T-cell (primary cell): ENCODE measurements at regions of chr21 and their contacts with region 1.

Region 1: GRCh38 chr21:34888569-34889319 is 160.4 kb downstream of the RUNX1 start:
- DNase-seq: peak; percentile 29 to 83 (median 54)
- ATAC-seq: peak; percentile 44 to 55 (median 50)
- H3K4me3 ChIP-seq: peak overlapping the region; percentile 48 to 73
- H3K4me3 Mint-ChIP-seq: peak overlapping the region; percentile 89 to 98 (median 96)
- H3K27ac ChIP-seq: peak overlapping the region; percentile 72
- H3K27ac Mint-ChIP-seq: peak overlapping the region; percentile 96 to 98
- H3K4me1 ChIP-seq: peaks cover 47 to 52% of the 10 kb centered on the region in 2 experiments
- H3K4me1 Mint-ChIP-seq: peaks cover 54 to 66% (median 59%) of the 10 kb centered on the region in 3 donors
- H3K27me3 ChIP-seq: no peaks in the 10 kb centered on the region
- H3K27me3 Mint-ChIP-seq: no peaks in the 10 kb centered on the region

Region 2: DNA sequence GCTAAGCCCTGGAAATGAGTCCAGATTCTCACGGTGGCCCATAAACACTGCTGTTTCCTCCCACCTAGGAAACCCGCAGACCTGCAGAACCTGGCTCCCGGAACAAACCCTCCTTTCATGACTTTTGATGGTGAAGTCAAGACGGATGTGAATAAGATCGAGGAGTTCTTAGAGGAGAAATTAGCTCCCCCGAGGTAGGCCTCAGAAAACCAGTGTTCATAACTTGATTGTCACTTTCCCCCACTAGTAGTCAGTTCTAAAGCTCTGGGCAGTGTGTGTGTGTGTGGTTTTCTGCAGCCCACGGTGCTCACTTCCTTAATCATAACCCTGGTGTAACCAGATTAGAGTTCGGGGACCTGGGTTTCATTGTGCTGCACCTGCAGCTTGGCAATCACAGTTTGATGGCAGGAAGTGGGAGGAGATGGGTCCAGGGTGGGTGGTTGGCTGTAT is 180.8 kb before region 1 on chr21:
- CTCF ChIA-PET with region 1: no interaction called
- POLR2A ChIA-PET with region 1: no interaction called
- DNase-seq: peak in 29 of 35 experiments; percentile 3 to 51 (median 23)
- ATAC-seq: peak; percentile 82 to 92 (median 87)
- H3K4me3 ChIP-seq: no peak overlapping the region
- H3K4me3 Mint-ChIP-seq: peak overlapping the region; percentile 13 to 68 (median 42)
- H3K27ac ChIP-seq: no peak overlapping the region
- H3K27ac Mint-ChIP-seq: peak overlapping the region; percentile 46 to 78
- H3K4me1 ChIP-seq: peaks cover 5 to 20% of the 10 kb centered on the region in 2 experiments
- H3K4me1 Mint-ChIP-seq: peaks cover 22 to 29% (median 27%) of the 10 kb centered on the region in 3 donors
- H3K27me3 ChIP-seq: peaks cover 0 to 5% of the 10 kb centered on the region in 2 experiments
- H3K27me3 Mint-ChIP-seq: peaks cover 3 to 5% of the 10 kb centered on the region in 2 donors

Region 3: GRCh38 chr21:34838956-34839820 is 49.6 kb before region 1 on chr21:
- CTCF ChIA-PET with region 1: no interaction called
- POLR2A ChIA-PET with region 1: no interaction called
- DNase-seq: no peak
- ATAC-seq: no peak
- H3K4me3 ChIP-seq: no peak overlapping the region
- H3K4me3 Mint-ChIP-seq: no peak overlapping the region
- H3K27ac ChIP-seq: no peak overlapping the region
- H3K27ac Mint-ChIP-seq: peak overlapping the region in 1 of 2 donors; percentile 29
- H3K4me1 ChIP-seq: peaks cover 6 to 29% of the 10 kb centered on the region in 2 experiments
- H3K4me1 Mint-ChIP-seq: peaks cover 51 to 66% (median 66%) of the 10 kb centered on the region in 3 donors
- H3K27me3 ChIP-seq: no peaks in the 10 kb centered on the region
- H3K27me3 Mint-ChIP-seq: no peaks in the 10 kb centered on the region

Region 4: GRCh38 chr21:35400233-35400957 is 511.7 kb after region 1 on chr21:
- CTCF ChIA-PET with region 1: interaction called, 4 to 12 read pairs
- POLR2A ChIA-PET with region 1: no interaction called
- DNase-seq: peak in 29 of 35 experiments; percentile 0 to 80 (median 19)
- ATAC-seq: peak; percentile 81 to 94 (median 93)
- H3K4me3 ChIP-seq: no peak overlapping the region
- H3K4me3 Mint-ChIP-seq: no peak overlapping the region
- H3K27ac ChIP-seq: no peak overlapping the region
- H3K27ac Mint-ChIP-seq: no peak overlapping the region
- H3K4me1 ChIP-seq: peaks cover 0 to 9% of the 10 kb centered on the region in 2 experiments
- H3K4me1 Mint-ChIP-seq: peaks cover 0 to 21% (median 10%) of the 10 kb centered on the region in 3 donors
- H3K27me3 ChIP-seq: no peaks in the 10 kb centered on the region
- H3K27me3 Mint-ChIP-seq: peaks cover under 1 to 5% of the 10 kb centered on the region in 2 donors